ENCODE measurements at regions of chr18 and their contacts with region 1.

Region 1: DNA sequence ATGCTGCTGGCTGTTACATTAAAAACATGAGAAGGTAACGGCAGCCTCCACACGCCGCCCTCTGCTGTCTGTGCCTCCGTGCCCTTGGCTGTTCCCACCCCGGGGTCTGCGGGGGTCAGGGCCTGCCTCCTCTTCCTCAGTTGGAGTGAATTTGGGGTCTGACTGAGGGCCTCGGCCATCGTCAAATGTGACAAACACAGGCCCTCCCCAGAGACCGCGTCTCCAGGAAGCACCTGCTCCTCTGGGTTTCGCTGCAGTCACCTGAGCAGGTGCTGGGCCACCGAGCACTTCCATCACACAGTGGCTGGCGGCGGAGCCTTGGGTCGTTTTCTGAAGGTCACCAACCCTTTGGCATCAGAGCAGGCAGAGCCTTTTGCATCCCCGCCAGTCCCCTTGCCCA is 70.9 kb downstream of the NFATC1 start:
- DNase-seq: peak; percentile 54
- H3K4me3 ChIP-seq: no peak overlapping the region
- H3K27ac ChIP-seq: no peak overlapping the region
- H3K4me1 ChIP-seq: peaks cover 0 to 5% (median 1%) of the 10 kb centered on the region in 4 donors
- H3K27me3 ChIP-seq: no peaks in the 10 kb centered on the region
- CTCF ChIP-seq: no peak
- EP300 ChIP-seq: no peak
- POLR2A ChIP-seq: no peak

Region 2: DNA sequence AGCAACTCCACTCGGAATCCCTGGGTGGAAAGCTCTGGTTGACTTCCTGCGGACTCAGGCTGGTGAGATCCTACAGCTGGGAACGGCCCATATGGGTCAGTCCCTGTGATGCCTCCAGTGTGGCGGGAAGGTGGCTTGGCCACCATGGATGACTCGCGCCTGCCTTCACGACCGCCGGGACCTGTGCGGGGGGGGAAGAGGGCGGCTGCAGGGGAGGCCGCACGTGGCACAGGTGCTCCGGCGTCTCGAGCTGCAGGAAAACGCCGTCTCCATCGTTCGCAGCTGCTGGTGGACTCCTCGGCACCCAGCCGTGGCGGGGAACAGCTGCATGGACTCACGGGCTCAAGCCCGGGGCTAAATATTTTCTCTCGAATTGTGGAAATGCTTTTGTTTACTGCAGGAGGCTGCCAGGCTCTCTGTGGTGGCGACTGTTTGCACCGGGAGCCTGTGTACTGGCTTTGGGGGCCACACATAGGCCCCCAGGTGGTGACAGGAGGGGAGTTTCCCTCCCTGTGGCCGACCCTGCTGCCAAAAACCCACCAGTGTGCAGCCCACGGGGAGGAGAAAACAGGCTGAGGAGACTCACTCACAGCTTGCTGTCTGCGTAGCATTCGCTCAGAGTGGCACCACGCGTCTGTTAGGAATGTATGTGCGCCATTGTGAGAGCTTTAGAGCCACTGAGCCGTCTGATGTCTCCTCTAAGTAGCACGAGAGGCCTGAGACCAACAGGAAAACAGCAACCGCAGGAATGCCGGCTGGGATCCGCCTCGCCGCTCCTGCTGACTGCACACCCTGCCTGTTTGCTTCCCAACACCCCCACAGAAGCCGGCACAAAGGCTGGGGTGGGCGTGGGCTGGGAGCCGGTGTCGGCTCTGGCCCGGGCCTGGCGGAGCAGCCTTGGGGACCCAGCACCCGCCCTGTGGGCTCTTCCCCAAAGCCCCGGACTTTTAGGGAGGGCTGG is 18.4 kb after region 1 on chr18:
- in situ Hi-C with region 1: no loop called
- intact Hi-C with region 1: loop called (anchors 2 kb)
- DNase-seq: peak; percentile 11
- H3K4me3 ChIP-seq: no peak overlapping the region
- H3K27ac ChIP-seq: peak overlapping the region in 3 of 4 donors; percentile 7 to 55 (median 38)
- H3K4me1 ChIP-seq: peaks cover 0 to 15% (median 3%) of the 10 kb centered on the region in 4 donors
- H3K27me3 ChIP-seq: no peaks in the 10 kb centered on the region
- CTCF ChIP-seq: no peak
- EP300 ChIP-seq: no peak
- POLR2A ChIP-seq: no peak

Region 3: DNA sequence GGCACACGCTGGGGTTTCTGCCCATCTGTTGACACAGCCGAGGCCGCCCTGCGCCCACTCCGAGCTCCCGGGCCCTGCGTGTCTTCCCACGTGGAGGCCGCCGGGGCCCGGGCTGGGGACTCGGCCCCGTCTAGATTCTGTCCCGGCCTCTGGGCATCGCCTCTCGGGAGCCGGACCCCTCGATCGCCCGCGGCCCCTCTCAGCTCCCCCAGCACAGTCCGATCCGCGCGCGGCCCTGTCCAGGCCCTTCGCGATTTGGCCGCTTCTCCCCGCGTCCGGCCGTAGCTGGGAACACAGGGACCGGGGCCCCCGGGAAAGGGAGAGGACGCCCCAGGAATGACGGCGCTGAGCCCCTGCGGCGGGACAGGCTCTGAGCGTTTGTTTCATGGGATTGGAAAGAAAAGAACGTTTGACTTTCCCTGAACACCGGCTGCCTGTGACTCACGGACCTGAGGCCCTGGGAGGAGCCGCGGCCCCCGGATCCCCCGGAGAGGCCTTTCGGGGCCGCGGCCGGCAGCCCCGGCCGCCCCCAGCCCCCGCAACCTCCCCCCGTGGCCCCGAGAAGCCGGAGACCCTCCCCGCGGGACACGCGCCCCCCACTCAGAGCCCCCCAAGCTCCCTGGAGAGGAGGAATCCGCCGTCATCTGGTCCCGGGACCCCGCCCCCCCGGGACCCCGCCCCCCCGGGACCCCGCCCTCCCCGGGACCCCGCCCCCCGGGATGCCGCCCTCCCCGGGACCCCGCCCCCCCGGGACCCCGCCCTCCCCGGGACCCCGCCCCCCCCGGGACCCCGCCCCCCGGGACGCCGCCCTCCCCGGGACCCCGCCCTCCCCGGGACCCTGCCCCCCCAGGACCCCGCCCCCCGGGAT is 150.3 kb after region 1 on chr18:
- in situ Hi-C with region 1: no loop called
- intact Hi-C with region 1: no loop called
- DNase-seq: peak; percentile 3
- H3K4me3 ChIP-seq: peak overlapping the region in 2 of 4 donors; percentile 23 to 26
- H3K27ac ChIP-seq: no peak overlapping the region
- H3K4me1 ChIP-seq: no peaks in the 10 kb centered on the region
- H3K27me3 ChIP-seq: no peaks in the 10 kb centered on the region
- CTCF ChIP-seq: no peak
- EP300 ChIP-seq: no peak
- POLR2A ChIP-seq: no peak

Region 4: DNA sequence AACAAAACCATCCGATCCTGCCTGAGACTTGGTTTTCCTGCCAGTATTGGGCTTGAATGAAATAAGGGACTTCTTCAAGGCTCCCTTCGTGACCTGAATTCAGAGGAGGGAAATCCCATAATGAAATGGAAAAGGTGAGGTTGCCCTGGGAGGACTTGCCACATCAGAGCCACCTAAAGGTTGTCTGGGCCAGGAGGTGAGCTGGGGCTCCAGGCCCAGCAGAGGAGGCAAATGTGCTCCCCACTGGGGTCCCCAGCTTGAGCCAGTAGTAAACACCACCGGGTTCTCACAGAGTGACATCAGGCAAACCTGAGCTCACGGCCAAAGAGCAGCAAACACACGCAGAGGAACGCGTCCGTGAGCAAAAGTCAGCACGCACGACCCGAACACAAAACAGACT is 184.4 kb after region 1 on chr18:
- in situ Hi-C with region 1: no loop called
- intact Hi-C with region 1: loop called (anchors 5 kb)
- DNase-seq: no peak
- H3K4me3 ChIP-seq: no peak overlapping the region
- H3K27ac ChIP-seq: no peak overlapping the region
- H3K4me1 ChIP-seq: no peaks in the 10 kb centered on the region
- H3K27me3 ChIP-seq: no peaks in the 10 kb centered on the region
- CTCF ChIP-seq: no peak
- EP300 ChIP-seq: no peak
- POLR2A ChIP-seq: no peak

Measured in transverse colon (tissue), 4 donors.